HCT116 (cell line): ENCODE measurements at regions of chr4 and their contacts with region 1.

Region 1: DNA sequence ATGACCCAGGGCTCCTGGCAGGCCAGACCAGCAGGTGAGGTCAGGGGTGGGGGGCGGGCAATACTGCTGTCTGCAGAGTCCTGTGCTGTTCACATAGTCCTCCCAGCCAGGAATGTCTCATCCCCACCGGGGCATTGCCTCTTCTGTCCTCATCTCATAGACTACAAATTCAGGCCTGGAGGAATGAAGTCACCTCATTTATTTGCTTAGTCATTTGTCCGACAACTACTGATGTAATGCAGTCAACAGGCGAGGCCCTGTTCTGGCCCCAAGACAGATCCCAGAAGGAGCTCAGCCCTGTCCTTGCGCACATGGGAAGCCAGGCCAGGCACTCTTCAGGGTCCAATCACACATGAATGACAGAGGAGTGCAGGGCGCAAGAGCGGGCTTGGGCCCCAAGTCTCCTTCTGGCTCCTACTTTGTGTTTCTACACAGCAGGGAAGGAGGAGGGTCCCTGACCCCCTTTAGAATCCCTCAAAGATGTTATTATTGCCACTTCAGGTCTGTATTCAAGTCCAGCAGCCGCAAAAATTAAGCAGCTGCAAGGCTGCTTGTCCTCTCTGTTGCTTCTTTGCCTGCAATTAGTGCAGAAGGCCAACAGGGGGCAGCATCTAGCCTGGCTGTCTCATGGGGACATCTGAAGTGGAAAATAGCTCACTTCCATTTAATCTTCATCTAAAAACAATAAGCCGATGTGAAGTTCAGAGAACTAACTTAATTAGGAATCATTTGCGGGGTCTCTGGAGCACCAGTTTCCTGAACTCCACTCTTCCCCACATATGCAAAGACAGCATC is 15.2 kb upstream of the HMX1 start:
- DNase-seq: no peak
- ATAC-seq: no peak
- H3K4me3 ChIP-seq: no peak overlapping the region
- H3K27ac ChIP-seq: no peak overlapping the region
- H3K4me1 ChIP-seq: peaks cover 0 to 5% of the 10 kb centered on the region in 2 experiments; a peak in 1 of 4 replicates
- H3K27me3 ChIP-seq: no peaks in the 10 kb centered on the region
- CTCF ChIP-seq: peak; percentile 10 to 76 (median 73); a peak in 4 of 6 replicates
- POLR2A ChIP-seq: no peak
- RAD21 ChIP-seq: no peak

Region 2: GRCh38 chr4:8015512-8015911 is 871.3 kb before region 1 on chr4:
- CTCF ChIA-PET with region 1: no interaction called
- POLR2A ChIA-PET with region 1: no interaction called
- RAD21 ChIA-PET with region 1: no interaction called
- intact Hi-C with region 1: no loop called
- DNase-seq: no peak
- ATAC-seq: peak; percentile 70
- H3K4me3 ChIP-seq: no peak overlapping the region
- H3K27ac ChIP-seq: no peak overlapping the region
- H3K4me1 ChIP-seq: peaks cover 0 to 15% of the 10 kb centered on the region in 2 experiments; a peak in 2 of 4 replicates
- H3K27me3 ChIP-seq: peaks cover 10% of the 10 kb centered on the region; the same call in 1 of the 2 replicates
- CTCF ChIP-seq: peak; percentile 14 to 45 (median 40); a peak in 3 of 6 replicates
- POLR2A ChIP-seq: no peak
- RAD21 ChIP-seq: peak; percentile 48

Region 3: GRCh38 chr4:8607603-8608481 is 279.0 kb before region 1 on chr4:
- CTCF ChIA-PET with region 1: no interaction called
- POLR2A ChIA-PET with region 1: no interaction called
- RAD21 ChIA-PET with region 1: no interaction called
- intact Hi-C with region 1: loop called (anchors 10 kb)
- DNase-seq: no peak
- ATAC-seq: peak; percentile 67
- H3K4me3 ChIP-seq: no peak overlapping the region
- H3K27ac ChIP-seq: no peak overlapping the region
- H3K4me1 ChIP-seq: no peaks in the 10 kb centered on the region
- H3K27me3 ChIP-seq: 0 out of 2 replicates have a peak, but pooled peaks cover 4% of the 10 kb centered on the region
- CTCF ChIP-seq: peak; percentile 62 to 95 (median 92); a peak in 5 of 6 replicates
- POLR2A ChIP-seq: no peak
- RAD21 ChIP-seq: peak; percentile 79

Region 4: GRCh38 chr4:8688041-8688937 is 198.5 kb before region 1 on chr4:
- CTCF ChIA-PET with region 1: interaction called, 15 read pairs
- POLR2A ChIA-PET with region 1: no interaction called
- RAD21 ChIA-PET with region 1: interaction called, 3 to 4 read pairs
- intact Hi-C with region 1: loop called (anchors 1 kb)
- DNase-seq: peak; percentile 19
- ATAC-seq: peak; percentile 97
- H3K4me3 ChIP-seq: no peak overlapping the region
- H3K27ac ChIP-seq: no peak overlapping the region
- H3K4me1 ChIP-seq: peaks cover 0 to 3% of the 10 kb centered on the region in 2 experiments; a peak in 1 of 4 replicates
- H3K27me3 ChIP-seq: peaks cover 20% of the 10 kb centered on the region; the same call in 1 of the 2 replicates
- CTCF ChIP-seq: peak; percentile 78 to 98 (median 86); a peak in 5 of 6 replicates
- POLR2A ChIP-seq: no peak
- RAD21 ChIP-seq: peak; percentile 81

Region 5: GRCh38 chr4:8719421-8720016 is 167.3 kb before region 1 on chr4:
- CTCF ChIA-PET with region 1: no interaction called
- POLR2A ChIA-PET with region 1: no interaction called
- RAD21 ChIA-PET with region 1: no interaction called
- intact Hi-C with region 1: no loop called
- DNase-seq: no peak
- ATAC-seq: no peak
- H3K4me3 ChIP-seq: no peak overlapping the region
- H3K27ac ChIP-seq: no peak overlapping the region
- H3K4me1 ChIP-seq: no peaks in the 10 kb centered on the region
- H3K27me3 ChIP-seq: no peaks in the 10 kb centered on the region; the same call in 1 of the 2 replicates
- CTCF ChIP-seq: no peak
- POLR2A ChIP-seq: no peak
- RAD21 ChIP-seq: no peak

Region 6: DNA sequence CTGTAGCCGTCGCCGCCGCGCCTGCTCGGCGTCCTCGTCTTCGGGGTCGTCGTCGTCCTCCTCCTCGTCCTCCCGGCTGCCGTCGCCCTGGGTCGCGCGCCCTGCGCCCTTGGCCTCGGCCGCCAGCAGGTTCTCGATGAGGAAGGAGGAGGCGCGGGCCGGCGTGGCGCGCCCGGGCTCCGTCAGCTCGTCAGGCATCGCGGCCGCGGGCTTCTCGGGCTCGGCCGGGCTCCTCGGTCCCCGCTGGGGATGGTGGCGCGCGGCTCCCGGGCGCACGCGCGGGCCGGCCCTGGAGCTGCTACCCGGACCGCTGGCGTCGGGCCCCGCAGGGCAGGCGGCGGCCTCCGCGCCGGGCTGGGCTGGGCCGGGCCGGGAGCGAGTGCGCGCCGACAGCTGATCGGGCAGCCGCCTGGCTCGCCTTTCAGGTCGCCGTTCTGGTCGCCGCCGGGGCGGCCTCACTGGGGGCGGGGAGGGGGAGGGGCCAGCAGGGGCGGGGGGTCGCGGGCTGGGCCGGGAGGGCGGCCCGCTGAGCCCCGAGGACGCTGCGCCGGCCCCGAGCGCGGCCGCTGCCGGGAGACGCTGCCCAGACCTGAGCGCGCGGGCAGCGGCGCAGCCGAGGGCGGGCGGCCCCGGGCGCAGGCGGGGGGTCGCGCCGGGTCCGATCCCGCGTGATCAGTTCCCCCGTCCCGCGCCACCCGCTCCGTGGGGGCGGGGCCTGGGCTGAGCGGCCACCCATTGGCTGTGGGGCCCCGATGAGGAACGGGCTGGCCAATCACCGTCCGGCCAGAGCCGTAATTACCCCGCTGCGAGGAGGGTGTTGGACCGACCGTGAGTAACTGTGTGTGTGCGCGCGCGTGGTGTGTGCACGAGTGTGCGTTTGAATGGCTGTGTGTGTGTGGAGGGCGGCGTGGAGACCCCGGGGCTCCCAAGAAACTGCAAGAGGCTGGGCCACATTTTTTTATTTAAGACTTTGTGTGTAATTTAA is 15.1 kb before region 1 on chr4 and contains the start of gene HMX1:
- CTCF ChIA-PET with region 1: no interaction called
- POLR2A ChIA-PET with region 1: no interaction called
- RAD21 ChIA-PET with region 1: no interaction called
- intact Hi-C with region 1: no loop called
- DNase-seq: no peak
- ATAC-seq: peak; percentile 40; the same call in 1 of the 2 replicates
- H3K4me3 ChIP-seq: no peak within 1 kb of the TSS
- H3K27ac ChIP-seq: no peak within 1 kb of the TSS
- H3K4me1 ChIP-seq: no peaks in the 10 kb centered on the region
- H3K27me3 ChIP-seq: peaks cover 7% of the 10 kb centered on the region; the same call in 1 of the 2 replicates
- CTCF ChIP-seq: no peak
- POLR2A ChIP-seq: no peak
- RAD21 ChIP-seq: no peak
- total RNA-seq, gene HMX1: 0.39 TPM